ENCODE measurements at regions of chr22 and their contacts with region 1.

Region 1: GRCh38 chr22:31345331-31346254 is 553 bp downstream of the PATZ1 start:
- DNase-seq: peak; percentile 94
- ATAC-seq: peak; percentile 65
- H3K4me3 ChIP-seq: peak overlapping the region in 4 of 5 experiments; percentile 62 to 74 (median 70)
- H3K4me3 Mint-ChIP-seq: peak overlapping the region; percentile 81
- H3K27ac ChIP-seq: peak overlapping the region; percentile 36 to 63
- H3K27ac Mint-ChIP-seq: peak overlapping the region; percentile 86
- H3K4me1 ChIP-seq: peaks cover 32 to 53% of the 10 kb centered on the region in 2 donors
- H3K4me1 Mint-ChIP-seq: peaks cover 51% of the 10 kb centered on the region
- H3K27me3 ChIP-seq: no peaks in the 10 kb centered on the region
- H3K27me3 Mint-ChIP-seq: no peaks in the 10 kb centered on the region
- CTCF ChIP-seq: peak; percentile 79

Region 2: DNA sequence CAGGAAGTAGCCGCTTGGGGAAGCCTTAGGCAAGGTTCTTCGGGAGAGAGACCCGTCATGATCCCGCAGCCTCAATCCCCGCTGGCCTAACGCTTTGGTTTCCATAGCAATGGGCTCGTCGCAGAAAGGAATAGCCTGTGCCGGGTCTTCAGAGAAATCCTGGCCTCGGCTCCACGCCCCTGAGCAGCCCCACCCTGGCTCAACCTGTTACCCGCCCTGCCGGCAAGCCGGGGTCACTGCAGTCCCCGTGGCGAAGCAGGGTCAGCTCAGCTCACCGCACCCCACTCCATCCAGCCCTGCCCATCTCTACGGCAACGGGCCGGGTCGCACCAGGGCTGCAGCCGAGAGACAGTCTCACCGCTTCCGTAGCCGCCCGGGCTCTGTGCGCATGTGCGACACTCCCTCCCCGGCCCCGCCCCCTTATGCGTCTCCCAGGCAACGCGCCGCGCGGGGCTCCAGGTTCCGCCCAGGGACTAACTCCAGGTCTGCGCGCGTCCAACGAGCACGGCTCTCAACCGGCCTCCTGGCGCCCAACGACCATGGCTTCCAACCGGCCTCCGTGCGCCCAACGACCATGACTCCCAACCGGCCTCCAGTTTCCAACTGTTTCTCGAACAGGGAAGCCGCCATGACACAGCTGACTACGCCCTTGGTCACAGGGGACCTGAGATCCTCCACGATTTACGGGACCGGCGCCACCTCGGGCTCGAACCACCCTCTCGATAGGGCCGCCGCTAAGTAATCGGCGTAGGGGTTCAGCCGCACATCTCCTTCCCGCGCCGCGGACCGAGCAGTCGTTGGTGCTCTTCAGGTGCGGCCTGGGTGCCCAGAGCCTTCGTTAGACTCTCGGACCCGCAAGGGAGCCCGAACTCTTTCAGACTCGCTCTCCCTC is 677.9 kb before region 1 on chr22 and contains the start of gene DUSP18:
- CTCF ChIA-PET with region 1: no interaction called
- POLR2A ChIA-PET with region 1: no interaction called
- intact Hi-C with region 1: loop called (anchors 10 kb)
- DNase-seq: peak; percentile 96
- ATAC-seq: peak; percentile 93
- H3K4me3 ChIP-seq: peak within 1 kb of the TSS; percentile 81 to 93 (median 86)
- H3K4me3 Mint-ChIP-seq: peak within 1 kb of the TSS; percentile 98
- H3K27ac ChIP-seq: peak within 1 kb of the TSS; percentile 18 to 53
- H3K27ac Mint-ChIP-seq: peak within 1 kb of the TSS; percentile 92
- H3K4me1 ChIP-seq: peaks cover 12 to 17% of the 10 kb centered on the region in 2 donors
- H3K4me1 Mint-ChIP-seq: peaks cover 21% of the 10 kb centered on the region
- H3K27me3 ChIP-seq: peaks cover 0 to 6% (median 0%) of the 10 kb centered on the region in 4 experiments
- H3K27me3 Mint-ChIP-seq: no peaks in the 10 kb centered on the region
- CTCF ChIP-seq: peak; percentile 41
- total RNA-seq, gene DUSP18: 18.7 and 20.6 TPM in 2 replicates

Region 3: DNA sequence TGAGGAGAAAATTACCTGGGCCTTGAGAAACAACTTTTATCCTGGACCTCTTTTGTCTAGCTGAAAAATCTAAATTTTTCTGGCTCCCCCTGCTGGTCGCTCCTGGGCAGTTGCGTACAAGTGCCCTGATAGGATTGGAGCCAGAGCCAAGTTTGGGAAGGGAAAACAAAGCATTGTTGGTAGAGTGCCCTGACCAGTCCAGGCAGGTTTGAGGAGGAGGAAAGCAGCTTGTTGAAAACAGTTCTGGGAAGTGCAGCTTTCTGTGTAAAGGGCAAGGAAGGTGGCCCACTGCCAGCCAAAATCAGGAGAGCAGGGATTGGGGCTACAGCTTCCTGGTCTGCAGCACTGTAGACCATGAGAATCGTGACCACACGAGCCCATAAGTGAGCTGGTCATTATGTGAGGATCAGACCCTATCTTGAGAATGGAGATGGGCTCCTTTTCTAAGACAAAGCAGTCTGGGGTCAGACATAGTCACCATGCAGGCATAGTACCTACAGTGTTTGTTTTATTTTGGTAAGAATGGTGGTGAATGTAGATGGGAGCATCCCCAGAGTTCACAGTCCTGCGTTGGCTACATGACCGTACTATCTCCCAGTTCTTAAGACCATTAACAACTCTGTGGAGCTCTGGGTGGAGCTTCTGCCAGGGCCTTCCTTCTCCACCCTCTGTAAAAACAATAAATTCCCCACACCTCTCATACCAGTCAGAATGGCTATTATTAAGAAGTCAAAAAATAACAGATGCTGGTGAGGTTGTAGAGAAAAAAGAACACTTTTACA is 32.0 kb before region 1 on chr22:
- CTCF ChIA-PET with region 1: interaction called, 13 read pairs
- POLR2A ChIA-PET with region 1: no interaction called
- intact Hi-C with region 1: no loop called
- DNase-seq: peak; percentile 68
- ATAC-seq: peak; percentile 64
- H3K4me3 ChIP-seq: no peak overlapping the region
- H3K4me3 Mint-ChIP-seq: no peak overlapping the region
- H3K27ac ChIP-seq: no peak overlapping the region
- H3K27ac Mint-ChIP-seq: no peak overlapping the region
- H3K4me1 ChIP-seq: peaks cover 2 to 7% of the 10 kb centered on the region in 2 donors
- H3K4me1 Mint-ChIP-seq: peaks cover 10% of the 10 kb centered on the region
- H3K27me3 ChIP-seq: no peaks in the 10 kb centered on the region
- H3K27me3 Mint-ChIP-seq: no peaks in the 10 kb centered on the region
- CTCF ChIP-seq: peak; percentile 94

Region 4: DNA sequence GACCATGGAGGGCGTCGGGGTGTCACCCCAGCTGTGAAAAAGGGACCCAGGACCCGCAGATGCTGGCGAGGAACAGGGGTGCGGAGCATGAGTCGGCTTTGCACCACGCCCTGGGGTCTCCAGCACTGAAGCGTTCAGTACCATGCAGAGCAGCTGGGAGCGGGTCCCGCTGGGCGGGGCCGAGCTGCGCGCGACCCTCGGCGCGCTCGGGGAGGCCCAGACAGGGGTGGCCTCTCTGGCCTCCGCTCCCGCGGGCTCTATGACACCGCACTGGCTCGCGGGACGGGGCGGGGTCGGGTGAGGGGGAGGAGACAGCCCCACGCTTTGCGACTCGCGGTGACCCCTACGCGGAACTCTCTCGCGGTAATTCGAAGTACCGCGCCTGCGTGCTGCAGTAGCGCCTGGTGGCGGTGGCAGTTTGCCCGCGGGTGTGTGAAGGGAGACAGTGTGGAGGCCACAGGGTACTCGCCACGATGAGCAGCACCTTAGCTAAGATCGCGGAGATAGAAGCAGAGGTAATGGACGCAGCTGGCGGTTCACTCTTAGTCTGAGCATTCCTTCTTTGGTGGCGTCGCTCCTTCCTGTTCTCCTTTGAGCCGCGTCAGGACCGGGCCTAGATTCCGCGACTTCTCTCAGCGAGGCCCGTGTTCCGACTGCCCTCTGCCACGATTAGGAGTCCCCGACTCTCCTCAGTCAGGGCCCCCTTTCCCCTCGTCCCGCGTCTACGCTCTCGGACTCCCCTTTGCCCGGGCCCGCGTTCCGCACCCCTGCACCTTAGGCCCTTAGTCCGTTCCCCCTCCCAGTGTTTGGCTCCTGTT is 53.8 kb after region 1 on chr22 and contains the start of gene DRG1:
- CTCF ChIA-PET with region 1: interaction called, 9 read pairs
- POLR2A ChIA-PET with region 1: interaction called, 19 read pairs
- intact Hi-C with region 1: loop called (anchors 1 kb)
- DNase-seq: peak; percentile 95
- ATAC-seq: peak; percentile 99
- H3K4me3 ChIP-seq: peak within 1 kb of the TSS; percentile 79 to 88 (median 85)
- H3K4me3 Mint-ChIP-seq: peak within 1 kb of the TSS; percentile 98
- H3K27ac ChIP-seq: peak within 1 kb of the TSS; percentile 60 to 89
- H3K27ac Mint-ChIP-seq: peak within 1 kb of the TSS; percentile 95
- H3K4me1 ChIP-seq: peaks cover 13 to 17% of the 10 kb centered on the region in 2 donors
- H3K4me1 Mint-ChIP-seq: peaks cover 21% of the 10 kb centered on the region
- H3K27me3 ChIP-seq: no peaks in the 10 kb centered on the region
- H3K27me3 Mint-ChIP-seq: peaks cover 2% of the 10 kb centered on the region
- CTCF ChIP-seq: no peak
- total RNA-seq, gene DRG1: 58.9 and 77.7 TPM in 2 replicates

Region 5: DNA sequence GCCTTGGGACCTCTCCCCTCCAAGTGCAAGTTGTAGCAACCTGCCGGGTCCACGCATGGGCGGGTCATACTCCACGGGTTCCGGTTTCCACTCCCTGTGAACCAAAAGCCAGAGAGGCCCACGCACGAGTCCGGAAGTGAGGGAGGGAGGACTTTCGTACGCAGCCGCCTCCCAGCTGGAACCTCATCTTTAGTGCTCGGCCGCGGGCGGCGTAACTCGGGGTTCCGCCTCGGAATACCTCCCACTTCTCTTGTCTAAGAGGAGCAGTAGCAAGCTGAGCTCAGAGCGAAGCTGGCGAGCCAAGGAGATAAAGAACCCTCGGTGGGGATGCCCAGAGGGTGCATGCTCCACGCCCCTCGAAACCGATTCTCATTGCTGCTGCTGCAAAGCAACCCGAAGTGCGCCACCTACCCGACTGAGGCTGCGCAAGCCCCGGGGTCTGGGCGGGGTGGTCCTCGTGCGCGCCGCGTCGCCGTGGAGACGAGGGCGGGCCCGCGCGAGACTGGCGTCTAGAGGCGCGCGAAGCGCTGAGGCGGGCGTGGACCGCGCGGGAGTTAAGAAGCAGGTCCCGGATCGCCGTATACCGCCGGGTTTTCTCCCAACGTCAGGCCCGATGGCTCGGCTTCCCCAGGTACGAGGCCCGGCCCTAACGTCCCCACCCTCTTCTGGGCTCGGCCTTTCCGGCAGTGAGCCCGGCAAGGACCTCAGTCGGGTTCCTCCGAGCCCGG is 150.6 kb after region 1 on chr22 and contains the start of gene SFI1:
- CTCF ChIA-PET with region 1: no interaction called
- POLR2A ChIA-PET with region 1: no interaction called
- intact Hi-C with region 1: loop called (anchors 2 kb)
- DNase-seq: peak; percentile 97
- ATAC-seq: peak; percentile 87
- H3K4me3 ChIP-seq: peak within 1 kb of the TSS; percentile 71 to 88 (median 80)
- H3K4me3 Mint-ChIP-seq: peak within 1 kb of the TSS; percentile 97
- H3K27ac ChIP-seq: peak within 1 kb of the TSS; percentile 83 to 85
- H3K27ac Mint-ChIP-seq: peak within 1 kb of the TSS; percentile 97
- H3K4me1 ChIP-seq: peaks cover 25 to 45% of the 10 kb centered on the region in 2 donors
- H3K4me1 Mint-ChIP-seq: peaks cover 39% of the 10 kb centered on the region
- H3K27me3 ChIP-seq: no peaks in the 10 kb centered on the region
- H3K27me3 Mint-ChIP-seq: no peaks in the 10 kb centered on the region
- CTCF ChIP-seq: peak; percentile 34
- total RNA-seq, gene SFI1: 182 and 191 TPM in 2 replicates

Measured in B cell (primary cell).